Activated CD8-positive, alpha-beta T cell treated with anti-CD3 and anti-CD28 coated beads for 36 hours (primary cell): ENCODE measurements at regions of chr5 and their contacts with region 1.

Region 1: DNA sequence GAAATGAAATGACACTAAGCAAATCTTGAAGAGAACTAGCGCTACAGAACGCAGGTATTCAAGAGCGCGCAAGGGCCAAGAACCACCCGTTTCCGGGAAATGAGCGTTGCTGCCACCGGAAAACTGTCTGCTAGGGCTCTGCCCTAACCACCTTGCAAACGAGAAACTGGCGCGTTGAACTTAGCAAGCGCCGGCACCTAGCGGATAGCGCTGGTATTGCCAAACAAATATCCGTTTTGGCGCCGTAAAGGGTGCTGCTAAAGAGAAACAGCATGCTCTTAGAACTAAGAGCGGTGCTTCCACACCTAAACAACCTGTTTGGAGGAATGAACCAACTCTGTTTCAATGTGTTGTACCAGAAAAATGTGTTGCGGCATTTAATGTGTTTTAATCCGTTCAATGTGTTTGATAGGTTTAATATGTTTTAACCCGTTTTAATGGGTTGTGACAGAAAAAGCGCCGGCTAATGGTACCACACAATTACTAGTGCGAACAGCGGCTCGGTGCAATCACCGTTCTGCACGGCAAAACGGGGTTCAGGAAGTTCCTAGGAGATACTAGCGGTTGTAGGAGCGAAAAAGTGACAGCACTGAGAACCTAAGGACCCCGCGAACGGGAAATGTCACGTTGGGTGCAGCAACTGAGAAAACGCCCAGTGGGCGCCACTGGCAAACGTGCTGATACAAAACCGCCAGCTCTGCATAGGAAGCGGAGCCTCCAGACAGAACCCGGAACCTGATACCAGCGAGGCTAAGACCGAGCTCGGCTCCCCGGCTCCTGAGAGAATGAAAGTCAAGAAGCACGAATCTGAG is at the start of gene ANXA2R:
- DNase-seq: peak; percentile 97
- ATAC-seq: peak; percentile 67
- H3K4me3 Mint-ChIP-seq: peak within 1 kb of the TSS; percentile 81
- H3K27ac Mint-ChIP-seq: peak within 1 kb of the TSS; percentile 98
- H3K4me1 Mint-ChIP-seq: peaks cover 38% of the 10 kb centered on the region
- H3K27me3 Mint-ChIP-seq: no peaks in the 10 kb centered on the region
- CTCF ChIP-seq: peak; percentile 76
- total RNA-seq, gene ANXA2R: 8.0 to 10.4 TPM

Region 2: DNA sequence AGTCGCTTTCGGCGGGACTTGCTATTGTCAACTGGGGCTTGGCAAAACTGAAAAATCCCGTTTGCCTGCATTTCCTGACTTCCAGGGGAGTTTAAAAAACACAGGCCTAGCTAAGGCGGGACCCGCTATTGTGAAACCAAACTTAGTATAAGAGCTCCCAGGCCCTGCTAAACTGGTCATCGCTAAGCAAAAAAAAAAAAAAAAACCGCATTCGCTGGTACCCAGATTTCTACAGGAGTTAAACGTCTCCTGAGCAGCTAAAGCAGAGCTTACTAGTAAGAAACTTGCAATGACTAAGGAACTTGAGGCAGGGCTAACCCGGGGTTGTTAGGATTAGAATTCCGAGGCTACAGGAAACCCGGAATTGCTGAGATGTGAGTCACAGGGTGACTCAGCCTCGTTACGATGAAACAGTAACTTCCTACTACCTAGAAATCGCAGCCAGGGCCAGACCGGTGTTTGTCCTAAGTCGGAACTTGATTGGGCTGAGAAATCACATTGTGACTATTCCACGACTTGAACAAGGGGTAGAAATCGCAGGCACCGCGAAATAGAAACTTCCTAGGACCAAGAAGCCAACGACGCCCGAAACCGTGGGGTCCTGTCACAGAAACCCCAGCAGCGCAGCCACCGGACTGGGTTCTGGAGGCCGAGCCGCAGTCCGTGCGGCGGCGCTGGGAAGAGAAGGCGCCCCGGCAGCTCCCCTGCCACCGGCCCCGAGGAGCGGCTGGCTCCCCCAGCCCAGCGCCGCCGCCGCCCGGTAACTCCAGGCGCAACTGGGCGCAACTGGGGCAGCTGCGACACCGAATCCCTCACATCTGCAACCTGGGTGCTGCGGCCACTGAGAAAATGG is 89.8 kb before region 1 on chr5:
- CTCF ChIA-PET with region 1: interaction called, 9 read pairs
- POLR2A ChIA-PET with region 1: interaction called, 34 read pairs
- intact Hi-C with region 1: loop called (anchors 1 kb)
- DNase-seq: peak; percentile 82
- ATAC-seq: peak; percentile 46
- H3K4me3 Mint-ChIP-seq: peak overlapping the region; percentile 89
- H3K27ac Mint-ChIP-seq: peak overlapping the region; percentile 97
- H3K4me1 Mint-ChIP-seq: peaks cover 19% of the 10 kb centered on the region
- H3K27me3 Mint-ChIP-seq: no peaks in the 10 kb centered on the region
- CTCF ChIP-seq: no peak

Region 3: DNA sequence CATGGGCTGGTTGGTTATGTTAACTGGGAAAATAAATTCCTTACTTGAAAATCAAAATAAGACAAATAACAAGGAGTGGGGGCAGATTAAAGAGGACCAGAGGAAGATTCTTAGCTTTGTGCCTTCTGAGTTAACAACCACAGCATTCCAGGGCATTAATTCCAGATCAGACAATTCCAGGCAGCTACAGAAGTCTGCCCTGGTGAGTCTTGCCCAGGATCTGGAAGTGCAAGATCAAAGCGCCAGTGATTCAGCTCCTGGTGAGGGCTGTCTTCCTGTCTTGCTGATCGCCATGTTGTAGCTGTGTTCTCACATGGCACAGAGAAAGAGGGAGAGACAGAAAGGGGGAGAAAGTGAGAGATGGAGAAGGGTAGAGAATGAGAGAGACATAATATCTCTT is 66.0 kb before region 1 on chr5:
- CTCF ChIA-PET with region 1: no interaction called
- POLR2A ChIA-PET with region 1: no interaction called
- intact Hi-C with region 1: no loop called
- DNase-seq: no peak
- ATAC-seq: no peak
- H3K4me3 Mint-ChIP-seq: no peak overlapping the region
- H3K27ac Mint-ChIP-seq: no peak overlapping the region
- H3K4me1 Mint-ChIP-seq: no peaks in the 10 kb centered on the region
- H3K27me3 Mint-ChIP-seq: no peaks in the 10 kb centered on the region
- CTCF ChIP-seq: no peak

Region 4: DNA sequence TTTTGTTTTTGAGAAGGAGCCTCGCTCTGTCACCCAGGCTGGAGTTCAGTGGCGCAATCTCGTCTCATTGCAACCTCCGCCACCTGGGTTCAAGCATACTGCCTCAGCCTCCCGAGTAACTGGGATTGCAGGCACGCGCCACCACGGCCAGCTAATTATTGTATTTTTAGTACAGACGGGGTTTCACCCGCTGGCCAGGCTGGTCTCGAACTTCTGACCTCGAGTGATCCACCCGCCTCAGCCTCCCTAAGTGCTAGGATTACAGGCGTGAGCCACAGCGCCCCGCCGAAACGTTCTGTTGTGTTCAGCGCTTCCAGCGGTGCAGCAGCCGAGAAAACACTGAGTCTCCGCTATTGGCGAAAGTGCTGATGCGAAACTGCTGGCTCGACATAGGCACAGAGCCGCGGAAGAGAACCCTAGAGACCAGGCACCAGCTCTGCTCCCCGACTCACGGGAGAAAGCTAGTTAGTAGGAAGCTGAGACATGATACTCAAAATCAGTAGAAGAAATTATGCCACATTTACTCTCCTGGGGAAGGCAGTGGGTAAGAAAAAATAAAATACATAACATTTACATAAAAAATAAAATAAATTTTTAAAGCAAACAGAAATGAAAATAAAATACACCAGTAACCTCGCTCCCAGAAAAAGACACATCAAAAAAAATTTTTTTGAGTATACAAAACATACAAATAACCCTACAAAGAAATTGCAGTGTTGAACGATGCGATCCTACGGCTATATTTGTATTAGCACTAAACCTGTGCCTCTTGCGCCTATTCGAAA is 31.9 kb before region 1 on chr5:
- CTCF ChIA-PET with region 1: interaction called, 27 read pairs
- POLR2A ChIA-PET with region 1: interaction called, 91 read pairs
- intact Hi-C with region 1: loop called (anchors 5 kb)
- DNase-seq: peak; percentile 95
- ATAC-seq: peak; percentile 70
- H3K4me3 Mint-ChIP-seq: peak overlapping the region; percentile 93
- H3K27ac Mint-ChIP-seq: peak overlapping the region; percentile 99
- H3K4me1 Mint-ChIP-seq: peaks cover 30% of the 10 kb centered on the region
- H3K27me3 Mint-ChIP-seq: no peaks in the 10 kb centered on the region
- CTCF ChIP-seq: no peak

Region 5: DNA sequence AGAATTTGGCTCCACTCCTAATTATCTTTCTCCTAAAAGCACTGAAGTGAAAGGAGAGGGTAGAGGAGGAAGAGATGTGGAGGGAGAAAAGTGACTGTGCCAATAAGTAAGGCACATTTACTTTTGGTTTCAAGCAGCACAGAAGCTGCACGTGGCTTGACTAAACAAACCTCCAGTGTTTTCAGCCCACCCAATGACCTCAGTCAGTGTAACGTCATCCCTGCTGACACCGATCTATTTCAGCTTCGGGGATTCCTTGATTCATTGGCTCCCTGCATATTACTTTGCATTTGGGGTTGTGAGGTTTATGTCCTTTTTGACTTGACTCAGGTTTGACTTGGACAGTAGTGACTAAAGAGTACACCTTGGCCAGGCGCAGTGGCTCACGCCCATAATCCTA is 115.9 kb after region 1 on chr5:
- CTCF ChIA-PET with region 1: no interaction called
- POLR2A ChIA-PET with region 1: no interaction called
- intact Hi-C with region 1: no loop called
- DNase-seq: peak; percentile 36
- ATAC-seq: peak; percentile 52
- H3K4me3 Mint-ChIP-seq: no peak overlapping the region
- H3K27ac Mint-ChIP-seq: peak overlapping the region; percentile 20
- H3K4me1 Mint-ChIP-seq: peaks cover 49% of the 10 kb centered on the region
- H3K27me3 Mint-ChIP-seq: no peaks in the 10 kb centered on the region
- CTCF ChIP-seq: no peak